SK-N-SH (cell line): ENCODE measurements at regions of chr1 and their contacts with region 1.

Region 1: GRCh38 chr1:162612606-162613400 is 19.5 kb upstream of the DDR2 start:
- DNase-seq: no peak
- H3K4me3 ChIP-seq: no peak overlapping the region
- H3K27ac ChIP-seq: no peak overlapping the region
- H3K4me1 ChIP-seq: peaks cover 2 to 6% of the 10 kb centered on the region in 2 experiments; a peak in 3 of 4 replicates
- H3K27me3 ChIP-seq: no peaks in the 10 kb centered on the region
- CTCF ChIP-seq: no peak
- EP300 ChIP-seq: no peak
- RAD21 ChIP-seq: no peak

Region 2: DNA sequence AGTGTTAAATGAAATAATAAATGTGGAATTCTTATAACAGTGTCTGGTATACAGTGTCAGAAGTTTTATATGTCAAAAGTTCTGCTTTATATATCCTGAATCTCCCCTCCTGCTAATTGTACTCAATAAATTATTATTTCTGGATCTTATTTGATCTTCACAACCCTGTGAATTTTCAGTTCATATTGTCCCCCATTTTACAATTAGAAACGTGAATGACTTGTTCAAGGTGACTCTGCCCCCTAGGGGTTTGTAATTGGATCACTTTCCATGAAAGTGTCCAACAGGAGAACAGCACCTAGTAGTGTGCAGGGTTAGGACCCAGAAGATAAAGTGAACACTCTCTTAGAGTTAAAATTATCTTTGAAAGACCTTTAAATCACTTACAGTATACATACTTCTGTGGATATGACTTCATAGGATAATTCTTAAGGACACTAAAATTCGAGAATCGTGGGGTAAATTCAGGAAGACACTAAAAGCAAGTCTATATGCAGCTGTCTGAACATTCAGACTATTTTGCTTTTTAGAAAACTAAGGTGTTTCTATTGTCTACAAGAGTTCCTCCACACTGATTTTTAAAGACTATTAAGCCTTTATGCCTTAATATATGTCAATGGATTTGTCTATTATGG is 15.0 kb after region 1 on chr1:
- CTCF ChIA-PET with region 1: interaction called, 54 read pairs
- POLR2A ChIA-PET with region 1: no interaction called
- DNase-seq: no peak
- H3K4me3 ChIP-seq: no peak overlapping the region
- H3K27ac ChIP-seq: peak overlapping the region in 1 of 2 experiments; percentile 18; a peak in 1 of 4 replicates
- H3K4me1 ChIP-seq: peaks cover 39 to 44% of the 10 kb centered on the region in 2 experiments
- H3K27me3 ChIP-seq: no peaks in the 10 kb centered on the region
- CTCF ChIP-seq: peak; percentile 71
- EP300 ChIP-seq: no peak
- RAD21 ChIP-seq: peak; percentile 58

Region 3: DNA sequence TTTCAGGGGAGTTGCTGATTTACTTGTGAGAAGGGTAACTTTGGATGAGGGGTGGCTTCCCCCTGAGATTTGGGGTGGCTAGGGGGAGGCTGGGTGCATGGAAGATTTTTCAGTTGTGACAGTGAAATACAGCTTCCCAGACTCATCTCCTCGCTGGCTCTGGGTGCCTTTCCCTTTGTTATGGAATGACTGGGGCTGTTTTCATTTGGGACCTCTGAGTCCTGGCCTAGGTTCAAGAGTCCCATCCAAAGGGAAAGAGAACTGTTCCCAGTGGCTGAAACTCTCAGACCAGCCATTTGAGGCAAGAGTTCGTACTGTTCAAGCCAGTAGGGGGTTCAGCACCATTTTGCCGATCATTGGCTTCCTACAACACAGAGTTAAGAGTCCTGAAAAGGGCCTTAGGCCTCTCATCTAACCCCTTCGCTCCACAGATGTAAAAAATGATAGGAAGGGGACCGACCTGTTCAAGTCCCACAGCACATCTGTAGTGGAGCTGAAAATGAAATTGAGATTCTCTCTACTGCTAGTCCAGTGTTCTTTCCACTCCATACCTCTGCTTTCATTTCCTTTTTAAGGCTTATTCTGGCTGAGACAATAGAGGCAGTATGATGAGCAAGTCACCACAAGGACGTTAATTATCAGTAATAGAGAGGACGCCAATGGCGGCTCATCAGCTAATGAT is 20.4 kb after region 1 on chr1:
- CTCF ChIA-PET with region 1: interaction called, 54 read pairs
- POLR2A ChIA-PET with region 1: no interaction called
- DNase-seq: no peak
- H3K4me3 ChIP-seq: peak overlapping the region; percentile 62 to 78
- H3K27ac ChIP-seq: peak overlapping the region; percentile 99 to 100
- H3K4me1 ChIP-seq: peaks cover 45 to 50% of the 10 kb centered on the region in 2 experiments
- H3K27me3 ChIP-seq: no peaks in the 10 kb centered on the region
- CTCF ChIP-seq: peak; percentile 46
- EP300 ChIP-seq: peak in 1 of 2 experiments; percentile 6; a peak in 1 of 4 replicates
- RAD21 ChIP-seq: peak; percentile 31; the same call in 1 of the 2 replicates

Region 4: GRCh38 chr1:162701286-162701685 is 88.5 kb after region 1 on chr1:
- CTCF ChIA-PET with region 1: interaction called, 10 read pairs
- POLR2A ChIA-PET with region 1: no interaction called
- DNase-seq: no peak
- H3K4me3 ChIP-seq: no peak overlapping the region
- H3K27ac ChIP-seq: no peak overlapping the region
- H3K4me1 ChIP-seq: peaks cover 42 to 55% of the 10 kb centered on the region in 2 experiments; a peak in 3 of 4 replicates
- H3K27me3 ChIP-seq: no peaks in the 10 kb centered on the region
- CTCF ChIP-seq: no peak
- EP300 ChIP-seq: no peak
- RAD21 ChIP-seq: no peak